Ascending aorta (tissue), 2 donors: ENCODE measurements at regions of chr6 and their contacts with region 1.

Region 1: GRCh38 chr6:103335412-103335811 is 1524.3 kb downstream of the HACE1 start:
- DNase-seq: no peak
- H3K4me3 ChIP-seq: no peak overlapping the region
- H3K27ac ChIP-seq: no peak overlapping the region
- H3K4me1 ChIP-seq: no peaks in the 10 kb centered on the region
- H3K27me3 ChIP-seq: no peaks in the 10 kb centered on the region
- CTCF ChIP-seq: no peak

Region 2: DNA sequence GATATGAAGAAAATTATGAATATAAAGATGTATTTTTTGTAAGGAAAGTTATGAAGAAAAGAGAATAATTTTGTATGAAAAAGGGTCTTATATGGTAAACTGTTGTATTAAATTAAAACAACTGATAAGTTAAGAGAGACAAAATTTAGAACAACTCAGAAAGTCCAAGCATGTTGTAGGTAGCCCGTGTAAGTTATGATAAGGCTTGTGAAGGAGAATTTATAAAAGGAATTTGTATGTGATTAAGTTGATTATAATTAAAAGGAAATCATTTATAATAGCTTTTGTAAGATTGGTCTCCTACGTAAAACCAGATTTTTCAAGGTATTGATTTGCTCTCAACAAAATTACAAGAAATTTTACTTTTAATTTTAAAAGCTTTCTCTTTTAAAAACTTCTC is 55.0 kb before region 1 on chr6:
- intact Hi-C with region 1: loop called (anchors 10 kb)
- DNase-seq: no peak
- H3K4me3 ChIP-seq: no peak overlapping the region
- H3K27ac ChIP-seq: no peak overlapping the region
- H3K4me1 ChIP-seq: no peaks in the 10 kb centered on the region
- H3K27me3 ChIP-seq: no peaks in the 10 kb centered on the region
- CTCF ChIP-seq: no peak